AG04449 (cell line): ENCODE measurements at regions of chr17 and their contacts with region 1.

Region 1: DNA sequence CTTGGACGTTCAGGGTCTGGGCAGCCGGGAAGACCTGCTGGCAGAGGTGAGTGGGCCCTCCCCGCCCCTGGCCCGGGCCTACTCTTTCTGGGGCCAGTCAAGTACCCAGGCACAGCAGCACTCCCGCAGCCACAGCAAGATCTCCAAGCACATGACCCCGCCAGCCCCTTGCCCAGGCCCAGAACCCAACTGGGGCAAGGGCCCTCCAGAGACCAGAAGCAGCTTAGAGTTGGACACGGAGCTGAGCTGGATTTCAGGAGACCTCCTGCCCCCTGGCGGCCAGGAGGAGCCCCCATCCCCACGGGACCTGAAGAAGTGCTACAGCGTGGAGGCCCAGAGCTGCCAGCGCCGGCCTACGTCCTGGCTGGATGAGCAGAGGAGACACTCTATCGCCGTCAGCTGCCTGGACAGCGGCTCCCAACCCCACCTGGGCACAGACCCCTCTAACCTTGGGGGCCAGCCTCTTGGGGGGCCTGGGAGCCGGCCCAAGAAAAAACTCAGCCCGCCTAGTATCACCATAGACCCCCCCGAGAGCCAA is 8.6 kb upstream of the ABCC3 start:
- DNase-seq: no peak
- H3K4me3 ChIP-seq: no peak overlapping the region
- CTCF ChIP-seq: peak; percentile 92

Region 2: DNA sequence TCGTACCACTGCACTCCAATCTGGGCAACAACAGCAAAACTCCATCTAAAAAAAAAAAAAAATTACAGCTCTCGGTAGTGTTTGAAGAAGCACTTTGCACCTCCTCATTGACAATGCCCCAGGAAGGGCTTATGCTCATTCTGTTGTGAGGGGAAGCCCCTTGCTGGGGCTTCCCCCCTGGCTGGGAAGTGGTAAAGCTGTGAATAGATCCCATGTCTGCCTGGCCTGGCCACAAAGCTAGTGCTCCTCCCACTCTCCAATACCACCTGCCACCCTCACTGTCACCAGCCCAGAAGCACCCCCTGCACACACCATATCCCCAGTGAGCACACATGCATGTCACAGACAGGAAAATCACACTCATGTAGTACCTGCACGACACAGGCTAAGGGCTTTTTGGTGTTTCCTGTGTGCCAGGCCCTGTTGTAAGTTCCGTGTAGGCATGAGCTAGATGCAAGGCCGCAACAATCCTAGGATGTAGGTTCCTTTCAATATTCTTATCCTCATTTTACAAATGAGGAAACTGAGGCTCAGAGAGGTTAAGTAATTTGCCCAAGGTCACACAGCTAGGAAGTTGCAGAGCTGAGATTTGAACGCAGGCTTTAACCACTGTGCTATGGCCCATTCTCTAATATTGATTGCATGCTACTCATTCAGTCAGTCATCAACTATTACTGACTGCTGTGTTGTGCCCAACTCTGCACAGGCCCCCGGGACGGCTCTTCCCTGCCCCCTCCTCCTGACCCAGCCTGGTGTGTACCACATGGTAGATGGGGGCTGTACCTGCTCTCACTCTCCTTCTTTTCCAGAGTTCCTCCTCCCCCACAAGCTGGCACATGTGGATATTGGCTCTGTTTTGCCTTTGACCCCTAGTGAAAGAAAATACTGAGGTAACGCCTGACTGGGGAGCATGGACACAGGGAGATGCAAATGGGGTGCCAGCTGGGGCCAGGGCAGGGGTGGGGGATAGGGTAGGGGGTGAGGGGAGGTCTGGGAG is 412.8 kb before region 1 on chr17:
- CTCF ChIA-PET with region 1: no interaction called
- POLR2A ChIA-PET with region 1: no interaction called
- DNase-seq: no peak
- H3K4me3 ChIP-seq: no peak overlapping the region
- CTCF ChIP-seq: no peak

Region 3: GRCh38 chr17:50312308-50312707 is 313.8 kb before region 1 on chr17:
- CTCF ChIA-PET with region 1: no interaction called
- POLR2A ChIA-PET with region 1: no interaction called
- DNase-seq: no peak
- H3K4me3 ChIP-seq: no peak overlapping the region
- CTCF ChIP-seq: no peak

Region 4: DNA sequence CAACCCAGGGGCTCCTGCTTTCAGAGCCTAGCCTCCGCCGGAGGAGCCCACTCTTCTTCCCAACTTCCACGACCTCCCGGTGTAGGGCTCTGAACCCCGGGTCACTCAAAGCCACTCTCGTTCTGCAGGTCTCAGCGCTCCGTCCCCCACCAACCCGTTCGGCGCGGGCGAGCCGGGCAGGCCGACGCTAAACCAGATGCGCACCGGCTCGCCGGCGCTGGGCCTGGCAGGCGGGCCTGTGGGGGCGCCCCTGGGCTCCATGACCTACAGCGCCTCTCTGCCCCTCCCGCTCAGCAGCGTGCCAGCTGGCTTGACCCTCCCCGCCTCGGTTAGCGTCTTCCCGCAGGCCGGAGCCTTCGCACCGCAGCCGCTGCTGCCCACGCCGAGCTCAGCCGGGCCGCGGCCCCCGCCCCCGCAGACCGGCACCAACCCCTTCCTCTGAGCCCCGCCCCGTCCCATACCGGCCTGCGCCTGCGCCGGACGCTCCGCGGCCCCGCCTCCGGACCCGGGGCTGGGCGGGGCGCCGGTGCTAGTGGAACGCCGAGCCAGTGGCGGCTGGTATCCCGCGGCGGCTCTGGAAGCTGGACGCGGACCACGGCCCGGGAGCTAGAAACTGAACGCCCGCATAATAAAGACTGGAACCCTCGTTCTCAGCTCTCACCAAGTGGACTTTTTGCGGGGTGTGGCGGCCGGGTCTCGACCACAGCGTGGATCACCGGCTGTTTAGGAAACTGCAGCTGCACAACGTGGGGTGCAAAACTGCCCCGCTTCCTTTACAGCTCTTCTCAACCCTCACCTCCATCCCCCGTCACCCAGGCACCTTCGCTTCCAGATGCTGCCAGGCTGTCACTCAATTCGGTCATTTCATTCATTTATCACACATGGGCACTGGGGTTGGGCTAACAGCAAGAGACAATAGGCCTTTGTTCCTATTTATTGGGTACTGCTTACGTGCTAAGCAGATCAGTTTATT is 84.1 kb before region 1 on chr17:
- CTCF ChIA-PET with region 1: interaction called, 231 read pairs
- POLR2A ChIA-PET with region 1: no interaction called
- DNase-seq: no peak
- H3K4me3 ChIP-seq: peak overlapping the region; percentile 67
- CTCF ChIP-seq: peak; percentile 53

Region 5: GRCh38 chr17:50613007-50613992 is 12.8 kb before region 1 on chr17:
- CTCF ChIA-PET with region 1: interaction called, 40 read pairs
- POLR2A ChIA-PET with region 1: no interaction called
- DNase-seq: no peak
- H3K4me3 ChIP-seq: no peak overlapping the region
- CTCF ChIP-seq: no peak

Region 6: DNA sequence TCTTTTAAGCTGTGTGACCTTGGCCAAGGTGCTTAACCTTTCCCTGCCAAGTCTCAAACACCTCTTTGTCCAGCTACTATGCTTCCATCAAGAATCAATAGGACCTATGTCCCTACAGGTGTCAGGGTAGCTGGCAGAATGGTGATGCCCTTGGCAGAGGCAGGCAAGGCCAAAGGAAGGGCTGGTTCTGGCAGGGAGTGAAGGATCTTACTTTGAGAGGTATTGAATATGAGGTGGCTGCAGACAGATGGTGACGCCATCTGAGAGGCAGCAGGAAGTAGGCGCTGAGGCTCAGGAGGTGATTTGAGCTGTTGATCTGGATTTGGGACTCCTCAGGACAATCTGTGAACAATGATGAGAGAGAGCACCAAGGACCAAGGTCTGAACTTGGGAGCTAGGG is 21.1 kb after region 1 on chr17:
- CTCF ChIA-PET with region 1: interaction called, 166 read pairs
- POLR2A ChIA-PET with region 1: no interaction called
- DNase-seq: no peak
- H3K4me3 ChIP-seq: no peak overlapping the region
- CTCF ChIP-seq: no peak

Region 7: DNA sequence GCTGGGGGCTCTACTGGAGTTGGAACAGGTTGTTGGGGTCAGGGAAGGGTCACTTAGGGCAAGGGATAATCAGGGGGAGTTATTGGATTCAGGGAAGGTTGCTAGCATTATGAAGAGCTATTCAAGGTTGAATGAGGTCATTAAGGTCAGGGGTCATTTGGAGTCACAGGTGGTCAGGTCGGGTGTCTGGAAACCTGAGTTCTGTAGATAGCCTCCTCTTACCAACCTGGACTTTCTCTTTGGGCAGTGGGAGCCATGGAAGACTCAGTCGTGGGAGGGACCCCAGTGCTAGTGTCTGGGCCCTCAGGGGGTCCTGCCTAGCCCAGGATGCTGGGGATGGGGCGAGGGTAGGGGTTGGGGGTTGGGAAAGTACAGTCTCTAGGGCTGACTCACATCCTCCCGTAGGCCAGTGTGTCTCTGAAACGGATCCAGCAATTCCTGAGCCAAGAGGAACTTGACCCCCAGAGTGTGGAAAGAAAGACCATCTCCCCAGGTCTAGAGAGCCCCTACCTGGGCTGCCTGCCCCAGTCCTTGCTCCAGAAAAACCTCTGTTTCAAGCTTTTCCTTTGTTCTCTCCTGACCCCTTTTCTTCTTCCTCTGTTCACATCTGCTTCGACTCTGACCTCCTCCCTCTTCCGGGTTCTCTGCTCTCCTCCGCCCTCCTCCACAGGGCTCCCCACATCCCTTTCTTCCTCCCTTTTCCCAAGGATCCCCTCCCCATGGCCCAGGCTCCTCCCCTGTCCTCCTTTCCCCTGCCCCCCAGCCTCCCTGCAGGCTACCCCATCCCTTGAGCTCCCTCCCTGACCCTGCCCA is 42.1 kb after region 1 on chr17:
- CTCF ChIA-PET with region 1: interaction called, 18 read pairs
- POLR2A ChIA-PET with region 1: no interaction called
- DNase-seq: no peak
- H3K4me3 ChIP-seq: peak overlapping the region; percentile 3
- CTCF ChIP-seq: no peak

Region 8: DNA sequence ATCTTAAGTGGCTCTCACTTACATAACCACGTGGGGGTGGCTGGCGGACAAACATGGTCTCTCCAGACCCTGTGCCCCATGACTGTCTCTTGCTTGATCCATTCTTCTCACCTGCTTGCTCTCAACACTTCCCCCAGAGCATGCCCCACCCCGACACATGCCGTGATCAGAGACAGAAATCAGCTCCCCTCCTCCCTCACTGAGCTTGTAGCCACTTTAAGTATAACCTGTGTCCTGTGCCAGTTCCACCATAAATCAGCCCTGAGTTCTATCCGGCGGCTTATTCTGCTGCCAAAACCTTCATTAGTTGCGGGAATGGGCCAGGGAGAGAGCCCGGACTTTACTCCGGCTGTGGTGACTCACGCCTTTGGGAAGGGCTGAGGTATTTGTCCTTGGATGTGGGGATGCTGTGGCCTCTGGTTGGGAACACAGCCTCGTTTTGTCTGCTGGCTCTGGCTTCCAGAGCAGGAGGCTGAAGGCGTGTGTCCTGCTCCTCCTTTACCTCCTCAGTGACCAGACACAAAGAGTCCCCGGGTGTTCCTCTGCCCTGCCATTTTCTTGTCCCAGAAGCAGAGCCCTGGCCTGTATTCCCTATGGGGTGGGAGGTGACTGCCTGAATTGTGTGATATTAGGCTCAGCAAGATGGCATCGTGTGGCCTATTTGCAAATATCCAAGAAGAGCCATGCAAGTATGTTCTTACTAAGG is 60.5 kb after region 1 on chr17:
- CTCF ChIA-PET with region 1: interaction called, 150 read pairs
- POLR2A ChIA-PET with region 1: no interaction called
- DNase-seq: no peak
- H3K4me3 ChIP-seq: no peak overlapping the region
- CTCF ChIP-seq: no peak

Region 9: DNA sequence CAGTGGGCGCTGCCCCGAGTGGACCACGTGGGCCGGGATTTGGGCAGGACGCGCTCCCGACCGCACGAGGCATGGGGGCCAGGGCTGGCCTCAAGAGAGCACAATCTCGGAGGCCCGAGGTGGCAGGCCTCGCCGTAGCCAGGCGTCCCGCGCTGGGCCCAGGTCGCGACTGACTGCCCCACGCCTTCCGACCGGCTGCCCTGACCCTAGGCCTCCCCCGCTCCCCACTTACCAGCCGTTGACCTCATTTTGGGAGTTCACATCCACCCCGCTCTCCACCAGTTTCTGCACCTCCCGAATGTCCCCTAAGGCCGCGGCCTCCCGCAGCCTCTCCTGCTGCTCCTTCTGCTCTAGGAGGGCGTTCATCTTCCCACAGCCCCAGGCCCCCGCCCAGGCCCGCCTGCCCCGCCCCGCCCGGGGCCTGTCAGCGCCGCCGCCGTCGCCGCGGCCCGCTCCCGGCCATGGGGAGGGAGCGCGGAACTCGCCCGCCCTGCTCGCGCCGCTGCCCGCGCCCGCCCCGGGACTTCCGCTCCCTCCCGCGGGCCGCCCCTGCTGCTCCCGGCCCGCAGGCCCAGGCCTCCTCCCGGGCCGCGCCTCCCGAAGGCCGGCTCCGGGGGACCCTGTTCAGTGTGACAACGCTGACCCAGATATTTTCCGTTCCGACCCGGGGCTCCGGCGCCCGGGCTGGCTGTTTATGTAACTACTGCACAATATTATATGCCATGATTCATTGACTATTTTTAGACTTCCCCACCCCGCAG is 81.4 kb after region 1 on chr17 and contains the start of gene ANKRD40:
- CTCF ChIA-PET with region 1: interaction called, 11 read pairs
- POLR2A ChIA-PET with region 1: no interaction called
- DNase-seq: peak; percentile 70
- H3K4me3 ChIP-seq: peak within 1 kb of the TSS; percentile 88
- CTCF ChIP-seq: no peak